ENCODE measurements at regions of chr13 and their contacts with region 1.

Region 1: DNA sequence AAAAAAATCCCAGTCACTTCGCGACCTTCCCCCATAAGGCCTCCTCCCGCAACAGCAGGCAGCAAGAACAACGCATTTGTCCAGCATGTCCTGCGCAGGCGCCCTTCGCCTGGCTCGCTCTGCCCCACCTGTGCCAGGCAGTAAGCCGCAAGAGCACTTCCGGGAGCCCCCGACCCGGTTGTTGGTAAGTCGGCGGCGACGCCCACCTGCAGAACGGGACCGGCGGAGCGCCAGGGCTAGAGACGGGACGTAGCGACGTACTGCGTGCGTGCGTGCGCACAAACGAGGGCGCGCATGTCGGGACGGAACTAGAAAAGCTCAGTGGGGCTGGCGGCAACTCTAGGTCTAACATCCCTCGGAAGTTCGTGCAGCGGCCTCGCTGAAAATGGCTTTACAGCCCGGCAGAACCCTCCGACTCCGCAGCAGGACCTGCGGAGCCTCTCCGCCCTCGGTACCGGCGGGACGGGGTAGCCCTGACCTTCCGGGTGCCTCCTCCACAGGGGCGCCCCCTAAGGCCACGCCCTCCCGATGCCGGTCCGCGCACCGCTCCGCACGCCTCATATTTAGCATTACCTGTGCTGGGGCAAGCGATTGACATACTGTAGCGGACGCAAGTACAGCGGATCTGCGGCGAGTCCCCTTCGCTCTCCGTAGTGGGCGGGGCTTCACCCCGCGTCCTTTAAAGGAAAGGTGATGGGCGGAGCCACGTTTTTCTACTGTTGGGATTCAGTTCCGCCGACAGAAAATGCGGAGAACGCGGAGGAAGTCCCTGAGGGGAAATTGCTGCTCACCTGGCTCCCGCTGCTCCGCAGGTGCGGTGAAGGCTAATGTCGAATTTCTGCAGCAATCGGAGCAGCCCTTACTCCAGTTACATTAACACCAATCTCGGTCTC is at the start of gene MTIF3:
- DNase-seq: peak; percentile 95
- H3K4me3 Mint-ChIP-seq: peak within 1 kb of the TSS; percentile 84
- H3K27ac Mint-ChIP-seq: peak within 1 kb of the TSS; percentile 97
- H3K4me1 Mint-ChIP-seq: peaks cover 16% of the 10 kb centered on the region
- H3K27me3 Mint-ChIP-seq: no peaks in the 10 kb centered on the region
- CTCF ChIP-seq: no peak
- total RNA-seq, gene MTIF3: 35.6 and 40.9 TPM in 2 replicates

Region 2: DNA sequence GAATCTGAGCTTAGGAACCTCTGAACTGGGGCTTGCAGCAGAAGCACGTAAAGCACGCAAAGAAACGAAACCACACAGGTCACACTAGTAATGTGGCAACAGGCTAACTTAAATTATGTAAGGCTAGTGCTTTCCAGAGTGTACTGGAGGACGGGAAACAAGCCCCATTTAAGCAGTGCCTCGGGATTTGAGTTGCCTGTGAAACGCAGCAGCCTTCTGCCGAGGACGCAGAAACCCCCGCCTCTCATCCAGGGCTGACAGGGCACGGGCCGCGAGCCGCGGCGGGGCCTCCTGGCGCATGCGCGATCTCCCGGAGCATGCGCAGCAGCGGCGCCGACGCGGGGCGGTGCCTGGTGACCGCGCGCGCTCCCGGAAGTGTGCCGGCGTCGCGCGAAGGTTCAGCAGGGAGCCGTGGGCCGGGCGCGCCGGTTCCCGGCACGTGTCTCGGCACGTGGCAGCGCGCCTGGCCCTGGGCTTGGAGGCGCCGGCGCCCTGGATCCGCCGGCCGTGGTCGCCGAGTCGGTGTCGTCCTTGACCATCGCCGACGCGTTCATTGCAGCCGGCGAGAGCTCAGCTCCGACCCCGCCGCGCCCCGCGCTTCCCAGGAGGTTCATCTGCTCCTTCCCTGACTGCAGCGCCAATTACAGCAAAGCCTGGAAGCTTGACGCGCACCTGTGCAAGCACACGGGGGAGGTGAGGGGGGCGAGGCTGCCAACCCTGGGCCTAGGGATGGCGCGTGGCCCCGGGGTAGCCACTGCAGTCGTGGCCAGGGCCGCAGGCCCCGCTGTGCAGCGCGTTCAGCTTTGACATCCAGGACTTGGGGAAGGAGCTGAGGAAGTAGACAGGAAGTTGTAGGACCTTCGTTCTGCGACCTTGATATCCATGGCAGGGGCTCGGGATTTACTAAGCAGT is 25.7 kb before region 1 on chr13 and contains the start of gene GTF3A:
- CTCF ChIA-PET with region 1: interaction called, 15 read pairs
- POLR2A ChIA-PET with region 1: interaction called, 220 read pairs
- intact Hi-C with region 1: loop called (anchors 1 kb)
- DNase-seq: peak; percentile 84
- H3K4me3 Mint-ChIP-seq: peak within 1 kb of the TSS; percentile 75
- H3K27ac Mint-ChIP-seq: peak within 1 kb of the TSS; percentile 57
- H3K4me1 Mint-ChIP-seq: peaks cover 29% of the 10 kb centered on the region
- H3K27me3 Mint-ChIP-seq: no peaks in the 10 kb centered on the region
- CTCF ChIP-seq: no peak
- total RNA-seq, gene GTF3A: 124 and 159 TPM in 2 replicates

Region 3: DNA sequence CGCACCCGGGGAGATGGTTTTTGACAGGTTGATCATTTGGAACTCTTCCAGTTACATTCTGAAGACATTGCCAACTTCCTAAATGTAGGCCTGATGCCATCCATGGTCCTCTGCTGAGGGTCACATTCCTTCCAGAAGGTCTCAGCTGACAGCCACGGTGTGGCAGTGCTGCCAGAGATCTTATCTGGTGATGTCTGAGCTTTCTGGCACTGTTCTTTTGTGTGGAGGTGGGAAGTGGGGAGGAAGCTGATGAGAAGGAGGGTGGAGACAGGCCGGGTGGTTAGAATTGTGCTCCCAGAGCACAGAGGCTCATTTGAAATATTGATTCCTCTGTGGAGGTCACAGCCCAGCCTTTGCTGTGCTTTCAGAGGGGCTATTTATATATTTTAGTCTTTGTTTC is 16.3 kb after region 1 on chr13:
- CTCF ChIA-PET with region 1: no interaction called
- POLR2A ChIA-PET with region 1: interaction called, 20 read pairs
- intact Hi-C with region 1: no loop called
- DNase-seq: no peak
- H3K4me3 Mint-ChIP-seq: no peak overlapping the region
- H3K27ac Mint-ChIP-seq: no peak overlapping the region
- H3K4me1 Mint-ChIP-seq: peaks cover 6% of the 10 kb centered on the region
- H3K27me3 Mint-ChIP-seq: no peaks in the 10 kb centered on the region
- CTCF ChIP-seq: no peak

Region 4: DNA sequence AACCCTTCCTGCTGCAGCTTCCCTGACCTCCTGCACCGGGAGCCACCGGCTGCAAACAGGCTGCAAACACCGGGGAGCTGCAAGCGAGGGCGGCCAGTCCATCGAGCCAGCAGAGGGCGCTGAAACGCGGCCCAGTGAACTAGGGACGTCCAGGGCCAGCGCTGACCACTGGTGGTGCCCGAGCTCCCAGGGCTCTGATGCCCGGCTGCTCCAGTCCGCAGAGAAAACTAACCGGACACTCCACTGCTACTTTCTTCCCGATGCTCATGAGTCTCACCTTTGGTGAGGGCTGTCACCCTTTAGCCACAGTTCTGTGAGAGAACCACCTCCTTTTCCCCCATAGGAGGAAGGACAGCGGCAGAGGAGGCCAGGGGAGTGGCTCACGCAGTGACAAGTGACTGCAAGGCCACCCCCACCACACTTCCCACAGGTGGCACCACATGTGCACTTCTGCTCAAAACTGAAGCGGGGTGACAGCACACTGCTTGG is 83.0 kb after region 1 on chr13:
- CTCF ChIA-PET with region 1: no interaction called
- POLR2A ChIA-PET with region 1: interaction called, 10 read pairs
- intact Hi-C with region 1: no loop called
- DNase-seq: peak; percentile 74
- H3K4me3 Mint-ChIP-seq: no peak overlapping the region
- H3K27ac Mint-ChIP-seq: no peak overlapping the region
- H3K4me1 Mint-ChIP-seq: peaks cover 8% of the 10 kb centered on the region
- H3K27me3 Mint-ChIP-seq: no peaks in the 10 kb centered on the region
- CTCF ChIP-seq: peak; percentile 80

Region 5: DNA sequence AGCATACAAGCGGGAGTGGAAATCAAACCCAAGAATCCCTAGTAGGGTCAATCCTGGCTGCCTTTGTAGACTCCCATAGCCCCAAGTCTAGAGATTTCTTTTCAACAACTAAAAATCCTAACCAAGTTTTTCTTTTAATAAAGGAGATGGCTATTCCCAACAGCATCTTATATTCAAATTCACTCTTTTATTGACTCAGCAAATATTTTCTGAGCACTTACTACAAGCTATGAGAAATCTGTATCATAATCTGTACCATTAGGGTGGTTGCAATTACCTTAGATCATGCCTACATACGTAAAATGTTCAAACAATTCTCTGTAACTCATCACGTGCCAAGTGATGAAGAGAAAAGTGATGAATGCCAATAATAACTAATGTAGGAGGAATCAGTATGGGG is 115.6 kb after region 1 on chr13:
- CTCF ChIA-PET with region 1: no interaction called
- POLR2A ChIA-PET with region 1: no interaction called
- intact Hi-C with region 1: no loop called
- DNase-seq: no peak
- H3K4me3 Mint-ChIP-seq: no peak overlapping the region
- H3K27ac Mint-ChIP-seq: no peak overlapping the region
- H3K4me1 Mint-ChIP-seq: no peaks in the 10 kb centered on the region
- H3K27me3 Mint-ChIP-seq: no peaks in the 10 kb centered on the region
- CTCF ChIP-seq: no peak

Region 6: GRCh38 chr13:27635266-27635665 is 185.1 kb after region 1 on chr13:
- CTCF ChIA-PET with region 1: interaction called, 3 read pairs
- POLR2A ChIA-PET with region 1: interaction called, 24 read pairs
- intact Hi-C with region 1: no loop called
- DNase-seq: no peak
- H3K4me3 Mint-ChIP-seq: no peak overlapping the region
- H3K27ac Mint-ChIP-seq: peak overlapping the region; percentile 72
- H3K4me1 Mint-ChIP-seq: peaks cover 35% of the 10 kb centered on the region
- H3K27me3 Mint-ChIP-seq: no peaks in the 10 kb centered on the region
- CTCF ChIP-seq: no peak

Measured in MCF 10A (cell line).